ENCODE measurements at regions of chr17 and their contacts with region 1.

Region 1: GRCh38 chr17:40203131-40203530 is 16.0 kb upstream of the WIPF2 start:
- DNase-seq: no peak
- H3K4me3 ChIP-seq: no peak overlapping the region
- H3K4me3 Mint-ChIP-seq: no peak overlapping the region
- H3K27ac ChIP-seq: no peak overlapping the region
- H3K27ac Mint-ChIP-seq: no peak overlapping the region
- H3K4me1 ChIP-seq: no peaks in the 10 kb centered on the region
- H3K4me1 Mint-ChIP-seq: peaks cover 0 to 5% (median 3%) of the 10 kb centered on the region in 3 donors
- H3K27me3 ChIP-seq: no peaks in the 10 kb centered on the region
- H3K27me3 Mint-ChIP-seq: peaks cover 7 to 9% of the 10 kb centered on the region in 2 donors

Region 2: GRCh38 chr17:40104594-40105486 is 98.3 kb before region 1 on chr17:
- CTCF ChIA-PET with region 1: no interaction called
- POLR2A ChIA-PET with region 1: no interaction called
- DNase-seq: no peak
- H3K4me3 ChIP-seq: no peak overlapping the region
- H3K4me3 Mint-ChIP-seq: peak overlapping the region in 6 of 7 donors; percentile 6 to 68 (median 53)
- H3K27ac ChIP-seq: no peak overlapping the region
- H3K27ac Mint-ChIP-seq: peak overlapping the region; percentile 73 to 99 (median 97)
- H3K4me1 ChIP-seq: peaks cover 90% of the 10 kb centered on the region
- H3K4me1 Mint-ChIP-seq: peaks cover 78 to 93% (median 86%) of the 10 kb centered on the region in 3 donors
- H3K27me3 ChIP-seq: no peaks in the 10 kb centered on the region
- H3K27me3 Mint-ChIP-seq: peaks cover 0 to 2% of the 10 kb centered on the region in 2 donors

Region 3: DNA sequence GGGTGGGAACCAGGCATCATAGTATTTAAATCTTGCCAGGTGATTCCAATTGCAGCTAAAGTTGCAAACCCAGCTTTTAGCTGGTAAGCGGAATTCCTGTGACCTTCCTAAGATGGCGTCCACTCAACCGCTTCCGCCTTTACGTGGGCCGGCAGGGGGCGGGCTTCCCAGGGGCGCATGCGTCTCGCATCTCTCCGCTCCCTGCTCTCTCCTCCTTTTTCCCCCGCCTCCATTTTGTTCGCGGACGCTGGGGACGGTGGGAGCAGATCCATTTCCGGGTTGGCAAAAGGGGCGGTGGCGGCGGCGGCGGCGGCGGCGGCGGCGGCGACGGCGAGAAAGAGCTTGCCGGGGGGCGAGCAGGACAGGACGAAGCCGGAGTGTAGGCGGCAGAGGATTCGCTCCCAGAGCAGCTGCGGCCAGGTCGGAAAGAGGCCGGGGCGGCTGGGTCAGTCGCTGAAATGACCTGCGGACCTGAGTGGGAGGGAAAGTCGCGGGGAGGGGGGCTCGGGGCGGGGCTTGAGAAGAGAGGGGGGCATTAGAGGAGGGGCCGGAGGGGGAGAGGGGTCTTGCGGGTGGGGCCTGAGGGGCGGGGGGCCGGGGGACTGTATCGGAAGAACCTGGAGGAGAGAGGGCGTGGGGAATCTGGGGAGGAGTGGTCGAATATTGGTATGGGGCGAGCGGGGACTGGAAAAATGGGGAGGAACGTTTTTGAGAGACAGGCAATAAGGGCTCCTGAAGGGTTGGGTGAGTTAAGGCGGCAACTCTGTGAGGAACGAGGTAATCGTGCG is 16.1 kb after region 1 on chr17 and contains the start of gene WIPF2:
- CTCF ChIA-PET with region 1: interaction called, 16 read pairs
- POLR2A ChIA-PET with region 1: no interaction called
- DNase-seq: peak; percentile 95 to 97 (median 96)
- H3K4me3 ChIP-seq: peak within 1 kb of the TSS; percentile 90
- H3K4me3 Mint-ChIP-seq: peak within 1 kb of the TSS; percentile 84 to 97 (median 91)
- H3K27ac ChIP-seq: peak within 1 kb of the TSS; percentile 99
- H3K27ac Mint-ChIP-seq: peak within 1 kb of the TSS; percentile 93 to 100 (median 100)
- H3K4me1 ChIP-seq: peaks cover 15% of the 10 kb centered on the region
- H3K4me1 Mint-ChIP-seq: peaks cover 22 to 48% (median 38%) of the 10 kb centered on the region in 3 donors
- H3K27me3 ChIP-seq: no peaks in the 10 kb centered on the region
- H3K27me3 Mint-ChIP-seq: no peaks in the 10 kb centered on the region
- total RNA-seq, gene WIPF2: 24.5 to 24.7 TPM

Region 4: DNA sequence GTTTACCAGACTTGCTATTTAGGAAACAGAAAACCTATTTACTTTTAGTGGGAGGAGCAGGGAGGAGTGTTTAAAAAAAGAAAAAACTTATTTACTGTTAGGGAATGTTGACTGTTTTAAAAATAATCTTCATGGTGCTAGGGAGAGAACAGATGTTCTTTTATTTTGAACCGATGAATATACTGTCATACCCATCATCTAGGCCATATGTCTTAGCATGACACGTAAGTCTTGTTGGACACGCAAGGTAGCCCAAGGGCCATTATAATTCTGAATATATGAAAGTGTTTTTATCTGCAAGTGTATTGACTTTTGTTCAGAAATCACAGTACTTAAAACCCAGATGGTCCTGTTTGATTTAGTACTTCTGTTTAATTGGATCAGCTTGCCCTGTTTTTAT is 27.5 kb after region 1 on chr17:
- CTCF ChIA-PET with region 1: no interaction called
- POLR2A ChIA-PET with region 1: no interaction called
- DNase-seq: no peak
- H3K4me3 ChIP-seq: no peak overlapping the region
- H3K4me3 Mint-ChIP-seq: peak overlapping the region in 1 of 7 donors; percentile 9
- H3K27ac ChIP-seq: no peak overlapping the region
- H3K27ac Mint-ChIP-seq: peak overlapping the region in 6 of 8 donors; percentile 10 to 81 (median 38)
- H3K4me1 ChIP-seq: no peaks in the 10 kb centered on the region
- H3K4me1 Mint-ChIP-seq: peaks cover 23 to 47% (median 25%) of the 10 kb centered on the region in 3 donors
- H3K27me3 ChIP-seq: no peaks in the 10 kb centered on the region
- H3K27me3 Mint-ChIP-seq: peaks cover 0 to 2% of the 10 kb centered on the region in 2 donors

Region 5: DNA sequence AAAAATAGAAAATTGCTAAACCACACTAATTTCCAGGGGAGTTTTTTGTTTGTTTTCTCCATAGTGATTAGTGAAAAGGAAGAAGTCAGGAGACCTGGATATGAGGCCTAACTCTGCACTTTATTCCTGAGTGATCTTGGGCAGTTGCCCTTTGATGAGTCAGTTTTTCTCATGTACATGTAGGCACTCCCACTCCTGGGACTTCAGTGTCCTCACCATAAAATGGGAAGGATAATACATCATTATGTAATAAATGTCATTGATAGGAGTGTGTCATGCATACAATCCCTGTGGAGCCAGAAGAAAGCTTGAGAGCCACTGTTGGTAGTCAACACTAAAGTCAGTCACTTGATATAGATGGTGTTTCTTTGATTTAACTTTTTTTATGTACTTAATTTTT is 48.4 kb after region 1 on chr17:
- CTCF ChIA-PET with region 1: no interaction called
- POLR2A ChIA-PET with region 1: no interaction called
- DNase-seq: no peak
- H3K4me3 ChIP-seq: no peak overlapping the region
- H3K4me3 Mint-ChIP-seq: no peak overlapping the region
- H3K27ac ChIP-seq: no peak overlapping the region
- H3K27ac Mint-ChIP-seq: peak overlapping the region in 1 of 8 donors; percentile 7
- H3K4me1 ChIP-seq: no peaks in the 10 kb centered on the region
- H3K4me1 Mint-ChIP-seq: peaks cover 28 to 51% (median 34%) of the 10 kb centered on the region in 3 donors
- H3K27me3 ChIP-seq: no peaks in the 10 kb centered on the region
- H3K27me3 Mint-ChIP-seq: no peaks in the 10 kb centered on the region

Region 6: GRCh38 chr17:40290629-40291287 is 87.6 kb after region 1 on chr17:
- CTCF ChIA-PET with region 1: interaction called, 14 read pairs
- POLR2A ChIA-PET with region 1: no interaction called
- DNase-seq: no peak
- H3K4me3 ChIP-seq: no peak overlapping the region
- H3K4me3 Mint-ChIP-seq: no peak overlapping the region
- H3K27ac ChIP-seq: no peak overlapping the region
- H3K27ac Mint-ChIP-seq: peak overlapping the region in 2 of 8 donors; percentile 17 to 37
- H3K4me1 ChIP-seq: peaks cover 11% of the 10 kb centered on the region
- H3K4me1 Mint-ChIP-seq: peaks cover 14 to 23% (median 21%) of the 10 kb centered on the region in 3 donors
- H3K27me3 ChIP-seq: no peaks in the 10 kb centered on the region
- H3K27me3 Mint-ChIP-seq: no peaks in the 10 kb centered on the region